Testis (tissue), 5 donors: ENCODE measurements at regions of chr12 and their contacts with region 1.

Region 1: DNA sequence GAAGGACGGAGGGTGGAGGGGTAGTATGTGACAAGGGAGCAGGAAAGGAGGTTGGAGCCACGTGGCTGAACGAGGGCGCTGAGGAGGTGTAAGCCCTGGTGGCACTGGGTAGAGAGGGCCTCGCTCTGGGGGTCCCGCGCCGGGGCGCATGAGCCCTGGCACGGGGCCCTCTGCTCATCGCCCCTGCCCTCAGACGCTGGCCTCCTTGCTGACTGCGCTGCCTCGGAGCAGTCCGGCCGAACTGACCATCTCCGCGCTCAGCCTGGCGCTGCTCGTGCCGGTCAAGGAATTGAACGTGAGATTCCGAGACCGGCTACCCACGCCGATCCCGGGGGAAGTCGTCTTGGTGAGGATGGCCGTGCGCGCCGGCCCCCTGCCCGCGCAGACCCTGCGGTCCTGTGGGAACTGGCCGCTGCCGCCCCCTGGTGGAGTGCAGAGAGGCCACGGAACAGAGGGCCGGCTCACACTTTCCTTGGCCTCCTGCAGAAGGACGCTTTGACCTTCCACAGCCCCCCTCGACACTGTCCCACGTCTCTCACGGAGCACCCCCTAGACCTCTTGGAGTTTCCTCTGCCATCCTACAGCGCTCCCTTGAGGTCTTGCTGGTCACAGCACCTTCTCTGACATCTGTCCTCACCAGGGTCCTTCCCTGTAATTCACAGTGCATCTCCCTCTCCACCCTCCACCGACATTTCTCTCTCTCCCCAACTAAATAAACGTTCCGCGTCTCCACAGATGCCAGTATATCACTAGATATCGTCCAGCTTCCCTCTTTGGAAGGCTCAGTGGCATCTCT is 10.5 kb downstream of the ARHGEF25 start:
- DNase-seq: peak; percentile 73
- H3K4me3 ChIP-seq: peak overlapping the region in 1 of 2 donors; percentile 42
- H3K27ac ChIP-seq: no peak overlapping the region
- H3K4me1 ChIP-seq: peaks cover 18% of the 10 kb centered on the region
- H3K27me3 ChIP-seq: no peaks in the 10 kb centered on the region
- CTCF ChIP-seq: peak; percentile 79 to 93 (median 83)
- POLR2A ChIP-seq: no peak

Region 2: DNA sequence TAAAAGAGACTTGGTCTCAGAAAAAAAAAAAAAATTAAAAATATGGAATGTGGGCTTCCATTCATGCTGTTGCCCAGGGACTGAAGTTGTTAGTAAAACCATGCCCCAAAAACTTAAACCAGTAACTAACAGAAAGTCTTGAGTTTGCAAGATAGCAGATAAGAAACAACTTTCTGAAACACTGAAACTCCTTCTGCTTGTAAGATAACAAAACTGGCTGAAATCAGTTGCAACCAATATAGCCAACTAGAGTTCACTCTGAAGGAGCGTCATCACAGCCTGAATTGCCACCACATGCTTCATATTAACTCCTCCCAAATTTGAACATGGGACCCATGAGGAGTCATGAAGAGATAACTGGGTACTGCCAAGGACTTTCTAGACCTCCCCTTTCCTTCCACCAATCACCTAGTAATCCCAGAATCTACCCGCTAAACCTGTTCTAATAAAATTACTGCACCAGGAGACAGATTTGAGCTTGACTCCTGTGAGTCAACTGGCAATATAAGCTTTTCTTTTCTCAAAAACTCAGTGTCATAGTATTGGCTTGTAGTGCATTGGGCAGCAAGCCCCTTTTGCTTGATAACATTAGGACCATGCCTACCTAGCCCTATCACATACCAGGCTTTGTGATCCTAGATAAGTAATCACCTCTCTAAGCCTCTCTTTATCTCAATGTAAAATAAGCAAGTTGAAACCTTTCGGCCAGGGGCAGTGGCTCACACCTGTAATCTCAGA is 244.4 kb before region 1 on chr12:
- intact Hi-C with region 1: no loop called
- DNase-seq: no peak
- H3K4me3 ChIP-seq: no peak overlapping the region
- H3K27ac ChIP-seq: peak overlapping the region; percentile 1 to 41
- H3K4me1 ChIP-seq: peaks cover 1% of the 10 kb centered on the region
- H3K27me3 ChIP-seq: no peaks in the 10 kb centered on the region
- CTCF ChIP-seq: no peak
- POLR2A ChIP-seq: no peak

Region 3: GRCh38 chr12:57583008-57583831 is 38.5 kb before region 1 on chr12:
- intact Hi-C with region 1: loop called (anchors 5 kb)
- DNase-seq: peak; percentile 85
- H3K4me3 ChIP-seq: no peak overlapping the region
- H3K27ac ChIP-seq: no peak overlapping the region
- H3K4me1 ChIP-seq: no peaks in the 10 kb centered on the region
- H3K27me3 ChIP-seq: no peaks in the 10 kb centered on the region
- CTCF ChIP-seq: peak; percentile 88 to 94 (median 92)
- POLR2A ChIP-seq: no peak

Region 4: GRCh38 chr12:57952766-57953165 is 331.1 kb after region 1 on chr12:
- intact Hi-C with region 1: no loop called
- DNase-seq: no peak
- H3K4me3 ChIP-seq: no peak overlapping the region
- H3K27ac ChIP-seq: no peak overlapping the region
- H3K4me1 ChIP-seq: peaks cover 10% of the 10 kb centered on the region
- H3K27me3 ChIP-seq: no peaks in the 10 kb centered on the region
- CTCF ChIP-seq: no peak
- POLR2A ChIP-seq: no peak